Esophagus squamous epithelium (tissue), 5 donors: ENCODE measurements at regions of chr5 and their contacts with region 1.

Region 1: DNA sequence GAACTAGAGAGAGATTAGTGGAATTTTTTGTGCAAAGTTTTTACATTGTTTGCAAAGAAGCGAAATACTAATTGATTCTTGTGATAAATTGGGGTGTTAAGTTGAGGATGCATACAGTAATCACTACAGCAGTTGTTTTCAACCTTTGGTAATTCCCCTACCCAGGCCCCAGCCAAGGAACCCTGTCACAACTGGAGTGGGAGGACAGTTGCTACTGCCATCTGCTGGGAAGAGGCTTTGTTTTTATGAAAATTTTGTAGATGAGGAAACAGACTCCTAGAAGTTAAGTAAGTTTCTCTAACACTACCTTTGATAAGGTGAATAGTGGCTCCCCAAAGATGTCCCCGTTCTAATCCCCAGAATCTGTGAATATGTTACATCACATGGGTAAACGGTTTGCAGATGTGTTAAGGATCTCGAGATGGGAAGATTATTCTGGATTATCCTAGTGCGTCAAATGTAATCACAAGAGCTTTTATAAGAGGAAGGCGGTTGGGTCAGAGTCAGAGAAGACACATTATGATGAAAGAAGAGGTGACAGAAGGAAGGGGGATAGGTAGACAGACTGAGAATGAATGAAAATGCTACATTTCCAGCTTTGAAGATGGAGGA is 34.0 kb upstream of the PPP1R2B start:
- DNase-seq: no peak
- H3K4me3 ChIP-seq: no peak overlapping the region
- H3K27ac ChIP-seq: no peak overlapping the region
- H3K4me1 ChIP-seq: no peaks in the 10 kb centered on the region
- H3K27me3 ChIP-seq: no peaks in the 10 kb centered on the region
- CTCF ChIP-seq: peak in 4 of 6 experiments; percentile 8 to 28 (median 14)
- POLR2A ChIP-seq: no peak

Region 2: GRCh38 chr5:155943516-155944407 is 872.3 kb before region 1 on chr5:
- intact Hi-C with region 1: loop called (anchors 5 kb)
- DNase-seq: no peak
- H3K4me3 ChIP-seq: no peak overlapping the region
- H3K27ac ChIP-seq: no peak overlapping the region
- H3K4me1 ChIP-seq: no peaks in the 10 kb centered on the region
- H3K27me3 ChIP-seq: no peaks in the 10 kb centered on the region
- CTCF ChIP-seq: peak; percentile 20 to 58 (median 44)
- POLR2A ChIP-seq: no peak

Region 3: DNA sequence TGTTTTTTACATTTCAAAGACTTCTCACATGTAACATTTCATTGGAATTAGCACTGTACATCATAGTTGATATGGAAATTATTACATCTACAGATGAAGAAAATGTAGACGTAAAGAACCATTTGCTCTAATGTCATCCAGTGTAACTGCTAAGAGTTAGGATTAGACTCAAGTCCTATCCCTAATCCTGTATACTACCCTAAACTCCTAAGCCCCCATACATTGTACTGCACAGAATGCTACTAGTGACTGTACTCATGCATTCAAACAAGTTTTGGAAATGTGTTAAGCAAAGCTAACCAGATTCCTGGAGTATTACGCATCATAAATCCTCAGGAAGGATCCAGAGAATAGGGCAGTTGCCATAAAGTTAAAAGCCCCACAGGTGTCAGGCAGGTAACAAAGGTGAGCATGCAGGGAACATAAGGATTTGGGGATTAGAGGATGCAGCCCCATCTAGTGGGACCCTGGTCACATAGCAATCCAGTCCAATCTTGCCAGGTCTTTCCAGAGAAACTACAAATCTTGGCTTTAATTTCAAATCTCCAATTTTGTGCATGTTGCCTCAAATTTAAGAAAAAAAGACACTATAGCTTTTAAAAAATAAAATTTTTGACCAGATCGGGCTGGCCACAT is 210.8 kb after region 1 on chr5:
- intact Hi-C with region 1: no loop called
- DNase-seq: no peak
- H3K4me3 ChIP-seq: no peak overlapping the region
- H3K27ac ChIP-seq: no peak overlapping the region
- H3K4me1 ChIP-seq: no peaks in the 10 kb centered on the region
- H3K27me3 ChIP-seq: no peaks in the 10 kb centered on the region
- CTCF ChIP-seq: peak in 1 of 6 experiments; percentile 32
- POLR2A ChIP-seq: no peak